ENCODE measurements at regions of chr2 and their contacts with region 1.

Region 1: DNA sequence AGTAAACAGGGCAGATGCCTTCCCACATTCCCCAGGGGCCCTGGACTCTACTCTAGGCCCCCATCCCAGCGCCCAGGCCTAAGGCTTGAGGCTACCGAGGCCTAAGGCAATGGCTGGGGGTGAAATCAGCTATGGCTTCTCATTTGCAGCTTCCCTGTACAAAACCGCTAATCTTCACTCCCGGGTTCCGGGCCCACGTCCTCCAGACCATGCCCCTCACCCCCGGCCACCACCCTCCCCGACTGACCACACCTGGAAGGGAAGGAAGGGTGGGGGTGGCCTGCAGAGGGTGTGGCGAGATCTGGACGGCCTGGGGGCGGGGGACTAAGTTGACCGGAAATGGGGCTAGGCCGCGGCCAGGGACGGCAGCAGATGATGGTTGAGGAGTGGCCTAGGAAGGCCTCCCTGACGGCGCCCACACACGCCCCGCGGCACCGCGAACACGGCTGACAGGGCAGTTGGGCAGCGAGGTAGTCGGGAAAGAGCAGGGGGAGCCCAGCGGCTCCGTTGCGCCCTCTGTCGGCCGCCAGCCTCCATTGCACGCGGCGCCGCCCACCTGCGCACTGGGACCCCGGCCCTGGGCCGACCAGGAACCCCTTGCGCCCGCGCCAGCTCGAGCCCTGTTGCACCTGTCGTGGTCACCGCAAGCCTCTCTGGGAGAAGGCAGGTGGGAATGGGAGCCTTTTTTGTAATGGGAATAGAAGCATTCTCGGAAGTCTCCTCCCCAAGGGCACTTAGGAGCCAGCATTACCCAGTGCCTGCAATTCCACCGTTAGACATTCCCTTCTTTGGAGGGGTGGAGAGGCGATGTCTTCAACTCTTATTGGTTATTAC is 117.1 kb upstream of the STPG4 start:
- DNase-seq: peak; percentile 4 to 71 (median 51)
- ATAC-seq: peak; percentile 90
- H3K4me3 ChIP-seq: no peak overlapping the region
- H3K4me3 Mint-ChIP-seq: peak overlapping the region; percentile 20 to 77 (median 60)
- H3K27ac ChIP-seq: no peak overlapping the region
- H3K27ac Mint-ChIP-seq: no peak overlapping the region
- H3K4me1 ChIP-seq: no peaks in the 10 kb centered on the region
- H3K4me1 Mint-ChIP-seq: peaks cover 0 to 11% (median 2%) of the 10 kb centered on the region in 7 donors
- H3K27me3 ChIP-seq: no peaks in the 10 kb centered on the region
- H3K27me3 Mint-ChIP-seq: peaks cover 0 to 7% (median 0%) of the 10 kb centered on the region in 5 donors

Region 2: GRCh38 chr2:47038656-47039488 is 233.4 kb before region 1 on chr2:
- CTCF ChIA-PET with region 1: interaction called, 3 read pairs
- POLR2A ChIA-PET with region 1: no interaction called
- intact Hi-C with region 1: loop called in 1 of 2 experiments (anchors 2 kb)
- DNase-seq: peak in 1 of 9 donors; percentile 33
- ATAC-seq: peak; percentile 15
- H3K4me3 ChIP-seq: no peak overlapping the region
- H3K4me3 Mint-ChIP-seq: peak overlapping the region in 1 of 10 donors; percentile 57
- H3K27ac ChIP-seq: no peak overlapping the region
- H3K27ac Mint-ChIP-seq: peak overlapping the region; percentile 10 to 90 (median 56)
- H3K4me1 ChIP-seq: no peaks in the 10 kb centered on the region
- H3K4me1 Mint-ChIP-seq: peaks cover 7 to 26% (median 16%) of the 10 kb centered on the region in 7 donors
- H3K27me3 ChIP-seq: no peaks in the 10 kb centered on the region
- H3K27me3 Mint-ChIP-seq: no peaks in the 10 kb centered on the region

Region 3: GRCh38 chr2:47127862-47128543 is 144.2 kb before region 1 on chr2:
- CTCF ChIA-PET with region 1: no interaction called
- POLR2A ChIA-PET with region 1: no interaction called
- intact Hi-C with region 1: loop called in 1 of 2 experiments (anchors 1 kb)
- DNase-seq: no peak
- ATAC-seq: no peak
- H3K4me3 ChIP-seq: no peak overlapping the region
- H3K4me3 Mint-ChIP-seq: no peak overlapping the region
- H3K27ac ChIP-seq: no peak overlapping the region
- H3K27ac Mint-ChIP-seq: no peak overlapping the region
- H3K4me1 ChIP-seq: no peaks in the 10 kb centered on the region
- H3K4me1 Mint-ChIP-seq: no peaks in the 10 kb centered on the region
- H3K27me3 ChIP-seq: no peaks in the 10 kb centered on the region
- H3K27me3 Mint-ChIP-seq: peaks cover 0 to 28% (median 6%) of the 10 kb centered on the region in 5 donors